GM12878 (cell line): ENCODE measurements at regions of chr17 and their contacts with region 1.

Region 1: GRCh38 chr17:35612924-35613521 is 25.9 kb downstream of the AP2B1 start:
- DNase-seq: no peak
- ATAC-seq: peak; percentile 52
- H3K4me3 ChIP-seq: no peak overlapping the region
- H3K27ac ChIP-seq: no peak overlapping the region
- H3K4me1 ChIP-seq: peaks cover 2% of the 10 kb centered on the region; the same call in 1 of the 2 replicates
- H3K27me3 ChIP-seq: no peaks in the 10 kb centered on the region
- CTCF ChIP-seq: peak; percentile 58 to 69 (median 59); a peak in 5 of 6 replicates
- EP300 ChIP-seq: no peak
- POLR2A ChIP-seq: no peak
- RAD21 ChIP-seq: peak; percentile 59

Region 2: GRCh38 chr17:35521150-35521549 is 91.9 kb before region 1 on chr17:
- CTCF ChIA-PET with region 1: no interaction called
- POLR2A ChIA-PET with region 1: no interaction called
- RAD21 ChIA-PET with region 1: no interaction called
- SMC1A ChIA-PET with region 1: no interaction called
- in situ Hi-C with region 1: no loop called
- intact Hi-C with region 1: no loop called
- DNase-seq: no peak
- ATAC-seq: peak; percentile 32
- H3K4me3 ChIP-seq: no peak overlapping the region
- H3K27ac ChIP-seq: no peak overlapping the region
- H3K4me1 ChIP-seq: 0 out of 2 replicates have a peak, but pooled peaks cover 3% of the 10 kb centered on the region
- H3K27me3 ChIP-seq: no peaks in the 10 kb centered on the region
- CTCF ChIP-seq: no peak
- EP300 ChIP-seq: no peak
- POLR2A ChIP-seq: no peak
- RAD21 ChIP-seq: no peak

Region 3: GRCh38 chr17:35578197-35578928 is 34.7 kb before region 1 on chr17 and contains the start of gene PEX12:
- CTCF ChIA-PET with region 1: interaction called, 10 read pairs
- POLR2A ChIA-PET with region 1: no interaction called
- RAD21 ChIA-PET with region 1: no interaction called
- SMC1A ChIA-PET with region 1: interaction called, 4 read pairs
- in situ Hi-C with region 1: no loop called
- intact Hi-C with region 1: no loop called
- DNase-seq: peak; percentile 58
- ATAC-seq: peak; percentile 94
- H3K4me3 ChIP-seq: peak within 1 kb of the TSS; percentile 83
- H3K27ac ChIP-seq: peak within 1 kb of the TSS; percentile 93
- H3K4me1 ChIP-seq: peaks cover 11% of the 10 kb centered on the region
- H3K27me3 ChIP-seq: no peaks in the 10 kb centered on the region
- CTCF ChIP-seq: no peak
- EP300 ChIP-seq: no peak
- POLR2A ChIP-seq: peak; percentile 90
- RAD21 ChIP-seq: no peak
- polyA plus RNA-seq, gene PEX12: 2.9 TPM

Region 4: GRCh38 chr17:35587074-35587971 is 25.7 kb before region 1 on chr17 and contains the start of gene AP2B1:
- CTCF ChIA-PET with region 1: interaction called, 16 read pairs
- POLR2A ChIA-PET with region 1: no interaction called
- RAD21 ChIA-PET with region 1: interaction called, 3 read pairs
- SMC1A ChIA-PET with region 1: interaction called, 7 read pairs
- in situ Hi-C with region 1: no loop called
- intact Hi-C with region 1: no loop called
- DNase-seq: peak; percentile 95
- ATAC-seq: peak; percentile 99
- H3K4me3 ChIP-seq: peak within 1 kb of the TSS; percentile 98
- H3K27ac ChIP-seq: peak within 1 kb of the TSS; percentile 87
- H3K4me1 ChIP-seq: peaks cover 3% of the 10 kb centered on the region; the same call in 1 of the 2 replicates
- H3K27me3 ChIP-seq: no peaks in the 10 kb centered on the region
- CTCF ChIP-seq: no peak; a peak in 1 of 6 replicates
- EP300 ChIP-seq: 0 out of 4 replicates have a peak, but pooled peaks of 1 of the 2 experiments have one; percentile 62
- POLR2A ChIP-seq: peak; percentile 88
- RAD21 ChIP-seq: no peak
- polyA plus RNA-seq, gene AP2B1: 18.6 to 24.3 TPM

Region 5: GRCh38 chr17:35709874-35710273 is 96.9 kb after region 1 on chr17:
- CTCF ChIA-PET with region 1: interaction called, 18 read pairs
- POLR2A ChIA-PET with region 1: no interaction called
- RAD21 ChIA-PET with region 1: no interaction called
- SMC1A ChIA-PET with region 1: interaction called, 4 read pairs
- in situ Hi-C with region 1: no loop called
- intact Hi-C with region 1: no loop called
- DNase-seq: no peak
- ATAC-seq: no peak
- H3K4me3 ChIP-seq: no peak overlapping the region
- H3K27ac ChIP-seq: no peak overlapping the region
- H3K4me1 ChIP-seq: no peaks in the 10 kb centered on the region; the same call in 1 of the 2 replicates
- H3K27me3 ChIP-seq: no peaks in the 10 kb centered on the region
- CTCF ChIP-seq: no peak
- EP300 ChIP-seq: no peak
- POLR2A ChIP-seq: no peak
- RAD21 ChIP-seq: no peak

Region 6: DNA sequence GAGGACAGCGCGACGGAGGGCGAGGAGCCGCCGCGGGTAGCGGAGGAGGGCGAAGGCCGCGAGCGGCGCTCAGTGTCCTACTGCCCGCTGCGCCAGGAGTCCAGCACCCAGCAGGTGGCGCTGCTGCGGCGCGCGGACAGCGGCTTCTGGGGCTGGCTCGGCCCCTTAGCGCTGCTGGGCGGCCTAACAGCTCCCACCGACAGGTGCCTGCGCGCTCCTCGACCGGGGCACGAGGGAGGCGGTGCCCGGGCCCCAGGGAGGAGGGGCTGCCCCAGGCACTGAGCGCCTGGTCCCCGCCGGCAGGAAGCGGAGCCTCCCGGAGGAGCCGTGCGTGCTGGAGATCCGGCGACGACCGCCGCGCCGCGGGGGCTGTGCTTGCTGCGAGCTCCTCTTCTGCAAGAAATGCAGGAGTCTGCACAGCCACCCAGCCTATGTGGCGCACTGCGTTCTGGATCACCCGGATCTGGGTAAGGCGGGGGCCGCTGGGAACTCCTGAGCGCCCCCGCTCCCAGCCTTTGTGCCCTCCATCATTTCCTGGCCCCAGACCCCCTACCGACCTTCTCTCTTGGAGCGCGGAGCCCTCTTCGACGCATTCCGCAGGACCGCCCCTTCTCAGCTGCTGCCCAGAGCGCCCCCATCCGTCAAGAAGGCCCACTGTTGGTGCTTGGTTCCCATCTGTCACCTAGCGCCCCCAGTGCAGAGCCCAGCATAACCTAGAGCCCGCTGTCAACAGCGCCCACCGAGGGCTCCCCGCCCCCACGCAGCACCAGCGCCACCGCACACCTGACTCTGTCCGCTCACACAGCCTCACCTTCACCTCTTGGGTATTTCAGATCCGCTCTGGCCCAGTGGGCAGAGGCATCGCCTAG is 151.3 kb after region 1 on chr17:
- CTCF ChIA-PET with region 1: interaction called, 13 read pairs
- POLR2A ChIA-PET with region 1: no interaction called
- RAD21 ChIA-PET with region 1: interaction called, 4 read pairs
- SMC1A ChIA-PET with region 1: no interaction called
- in situ Hi-C with region 1: no loop called
- intact Hi-C with region 1: no loop called
- DNase-seq: peak; percentile 49
- ATAC-seq: peak; percentile 98
- H3K4me3 ChIP-seq: peak overlapping the region; percentile 63; the same call in 1 of the 2 replicates
- H3K27ac ChIP-seq: no peak overlapping the region
- H3K4me1 ChIP-seq: peaks cover 5% of the 10 kb centered on the region
- H3K27me3 ChIP-seq: peaks cover 0 to 6% of the 10 kb centered on the region in 2 experiments
- CTCF ChIP-seq: peak; percentile 89 to 98 (median 96)
- EP300 ChIP-seq: no peak
- POLR2A ChIP-seq: no peak
- RAD21 ChIP-seq: peak; percentile 73

Region 7: GRCh38 chr17:35808962-35809854 is 196.2 kb after region 1 on chr17 and contains the start of gene TAF15:
- CTCF ChIA-PET with region 1: interaction called, 12 read pairs
- POLR2A ChIA-PET with region 1: no interaction called
- RAD21 ChIA-PET with region 1: interaction called, 12 read pairs
- SMC1A ChIA-PET with region 1: interaction called, 4 read pairs
- in situ Hi-C with region 1: no loop called
- intact Hi-C with region 1: no loop called
- DNase-seq: peak; percentile 97
- ATAC-seq: peak; percentile 96
- H3K4me3 ChIP-seq: peak within 1 kb of the TSS; percentile 80
- H3K27ac ChIP-seq: peak within 1 kb of the TSS; percentile 94
- H3K4me1 ChIP-seq: peaks cover 4% of the 10 kb centered on the region
- H3K27me3 ChIP-seq: no peaks in the 10 kb centered on the region
- CTCF ChIP-seq: peak; percentile 81 to 91 (median 89)
- EP300 ChIP-seq: peak in 1 of 2 experiments; percentile 40; a peak in 1 of 4 replicates
- POLR2A ChIP-seq: peak; percentile 97
- RAD21 ChIP-seq: peak; percentile 34
- polyA plus RNA-seq, gene TAF15: 9.5 to 17.1 TPM

Region 8: DNA sequence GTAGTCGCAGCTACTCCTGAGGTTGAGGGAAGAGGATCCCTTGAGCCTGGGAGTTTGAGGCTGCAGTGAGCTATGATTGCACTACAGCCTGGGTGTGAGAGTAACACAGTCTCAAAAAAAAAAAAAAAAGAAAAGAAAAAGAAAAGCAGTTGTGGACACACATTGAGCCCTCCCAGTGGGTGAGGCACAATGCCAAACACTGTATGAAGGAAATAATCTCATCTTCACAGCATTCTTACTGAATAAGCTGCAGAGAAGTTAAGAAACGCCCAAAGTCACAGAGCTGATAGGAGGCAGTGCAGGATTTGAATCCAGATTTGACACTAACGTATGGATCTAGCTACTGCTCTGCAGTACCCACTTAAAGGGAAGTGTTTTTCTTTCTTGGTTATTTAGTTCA is 336.4 kb after region 1 on chr17:
- CTCF ChIA-PET with region 1: no interaction called
- POLR2A ChIA-PET with region 1: no interaction called
- RAD21 ChIA-PET with region 1: no interaction called
- SMC1A ChIA-PET with region 1: no interaction called
- in situ Hi-C with region 1: no loop called
- intact Hi-C with region 1: no loop called
- DNase-seq: no peak
- ATAC-seq: no peak
- H3K4me3 ChIP-seq: no peak overlapping the region
- H3K27ac ChIP-seq: no peak overlapping the region
- H3K4me1 ChIP-seq: no peaks in the 10 kb centered on the region
- H3K27me3 ChIP-seq: no peaks in the 10 kb centered on the region; a peak in 1 of 4 replicates
- CTCF ChIP-seq: no peak
- EP300 ChIP-seq: no peak
- POLR2A ChIP-seq: no peak
- RAD21 ChIP-seq: no peak